ENCODE measurements at regions of chr12 and their contacts with region 1.

Region 1: GRCh38 chr12:54596526-54596946 is 8.1 kb upstream of the PPP1R1A start:
- DNase-seq: peak; percentile 76
- H3K4me3 ChIP-seq: no peak overlapping the region
- H3K27ac ChIP-seq: no peak overlapping the region
- H3K4me1 ChIP-seq: peaks cover 0 to 17% (median 13%) of the 10 kb centered on the region in 4 donors
- H3K27me3 ChIP-seq: no peaks in the 10 kb centered on the region
- CTCF ChIP-seq: peak in 3 of 4 experiments; percentile 51 to 84 (median 66)
- EP300 ChIP-seq: no peak
- POLR2A ChIP-seq: no peak

Region 2: GRCh38 chr12:54140588-54141388 is 455.7 kb before region 1 on chr12:
- intact Hi-C with region 1: no loop called
- DNase-seq: no peak
- H3K4me3 ChIP-seq: no peak overlapping the region
- H3K27ac ChIP-seq: peak overlapping the region; percentile 39 to 80 (median 62)
- H3K4me1 ChIP-seq: peaks cover 0 to 1% (median 0%) of the 10 kb centered on the region in 4 donors
- H3K27me3 ChIP-seq: no peaks in the 10 kb centered on the region
- CTCF ChIP-seq: no peak
- EP300 ChIP-seq: no peak
- POLR2A ChIP-seq: no peak

Region 3: GRCh38 chr12:54579696-54580333 is 16.7 kb before region 1 on chr12:
- intact Hi-C with region 1: loop called (anchors 2 kb)
- DNase-seq: peak; percentile 92
- H3K4me3 ChIP-seq: no peak overlapping the region
- H3K27ac ChIP-seq: peak overlapping the region in 2 of 4 donors; percentile 44 to 52
- H3K4me1 ChIP-seq: peaks cover 0 to 9% (median 8%) of the 10 kb centered on the region in 4 donors
- H3K27me3 ChIP-seq: no peaks in the 10 kb centered on the region
- CTCF ChIP-seq: peak; percentile 96 to 100 (median 98)
- EP300 ChIP-seq: no peak
- POLR2A ChIP-seq: no peak

Region 4: DNA sequence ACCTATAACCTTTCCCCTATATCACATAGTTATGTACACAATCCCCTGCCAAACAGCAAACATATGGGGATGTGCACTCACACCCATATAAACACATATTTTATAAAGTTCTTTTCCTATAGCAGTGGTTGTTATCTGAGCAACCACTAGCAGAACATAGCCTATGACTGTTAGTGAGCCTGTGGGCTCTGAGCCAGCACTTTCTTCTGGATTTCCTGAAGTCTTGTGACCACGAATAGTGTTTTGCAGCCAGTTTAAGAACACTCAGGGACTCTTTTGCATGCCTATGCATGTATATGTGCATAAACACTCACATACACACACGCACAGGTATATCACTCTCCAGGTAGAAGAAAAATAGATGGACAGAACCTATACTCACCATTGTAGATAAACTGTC is 370.9 kb after region 1 on chr12:
- intact Hi-C with region 1: no loop called
- DNase-seq: no peak
- H3K4me3 ChIP-seq: no peak overlapping the region
- H3K27ac ChIP-seq: no peak overlapping the region
- H3K4me1 ChIP-seq: no peaks in the 10 kb centered on the region
- H3K27me3 ChIP-seq: no peaks in the 10 kb centered on the region
- CTCF ChIP-seq: no peak
- EP300 ChIP-seq: no peak
- POLR2A ChIP-seq: no peak

Region 5: DNA sequence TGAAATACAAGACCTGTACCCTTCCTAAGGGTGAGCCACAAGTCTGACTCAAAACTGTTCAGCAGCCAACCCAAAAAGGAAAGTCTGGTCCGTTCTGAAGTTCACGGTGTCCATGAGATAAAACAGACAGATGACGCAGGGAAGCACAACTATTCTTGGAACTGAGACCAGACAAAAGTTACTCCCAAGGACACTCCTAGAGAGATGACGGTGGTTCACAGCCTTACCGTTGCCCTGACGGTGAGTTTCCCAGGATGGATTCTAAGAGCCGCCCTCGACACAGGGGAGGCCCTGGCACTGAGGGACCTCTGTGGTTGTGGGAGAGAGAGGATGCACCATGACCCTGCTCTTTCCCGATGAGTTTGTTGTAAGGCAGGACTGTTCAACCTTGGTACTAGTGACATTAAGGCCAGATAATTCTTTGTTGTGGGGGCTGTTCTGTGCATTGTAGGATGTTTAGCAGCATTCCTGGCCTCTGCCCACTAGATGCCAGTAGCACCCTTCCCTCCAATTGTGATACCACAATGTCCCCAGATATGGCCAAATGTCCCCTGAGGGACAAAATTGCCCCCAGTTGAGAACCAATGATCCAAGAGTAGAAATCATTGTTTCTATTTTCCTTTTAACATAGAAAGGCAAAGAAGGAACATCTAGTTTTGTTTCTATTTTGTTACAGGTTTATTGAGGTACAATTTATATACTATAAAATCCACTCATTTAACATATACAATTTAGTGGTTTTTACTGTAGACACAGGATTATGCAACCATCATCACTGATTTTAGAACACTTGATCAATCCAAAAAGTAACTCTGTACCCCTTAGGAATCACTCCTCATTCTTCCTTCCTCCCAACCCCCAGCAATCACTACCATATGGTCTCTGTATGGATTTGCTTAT is 1063.2 kb after region 1 on chr12:
- intact Hi-C with region 1: loop called (anchors 10 kb)
- DNase-seq: peak; percentile 77
- H3K4me3 ChIP-seq: peak overlapping the region in 1 of 4 donors; percentile 1
- H3K27ac ChIP-seq: peak overlapping the region; percentile 49 to 90 (median 80)
- H3K4me1 ChIP-seq: peaks cover 0 to 27% (median 16%) of the 10 kb centered on the region in 4 donors
- H3K27me3 ChIP-seq: no peaks in the 10 kb centered on the region
- CTCF ChIP-seq: peak in 1 of 4 experiments; percentile 33
- EP300 ChIP-seq: peak; percentile 85 to 96 (median 93)
- POLR2A ChIP-seq: peak in 1 of 2 donors; percentile 4

Measured in sigmoid colon (tissue), 7 donors.